ENCODE measurements at regions of chr2 and their contacts with region 1.

Region 1: DNA sequence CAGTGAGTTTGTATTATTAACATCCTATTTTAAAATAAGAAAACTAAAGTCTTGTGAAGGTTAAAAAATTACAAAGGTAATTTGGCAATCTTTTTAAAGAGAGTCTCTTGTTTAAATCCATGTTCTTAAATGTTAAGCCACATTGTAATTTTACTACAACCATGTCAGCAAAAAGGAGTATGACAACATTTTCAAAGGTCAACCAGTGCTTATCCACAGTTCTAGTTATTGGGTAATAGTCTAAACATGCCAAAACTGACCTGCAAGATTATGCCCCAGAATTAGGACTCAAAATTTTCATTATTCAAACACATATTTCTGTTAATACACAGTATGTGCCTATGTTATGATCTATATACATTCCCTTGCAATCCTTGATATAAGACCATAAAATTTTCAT is 1312.6 kb upstream of the CHAC2 start:
- H3K4me3 Mint-ChIP-seq: no peak overlapping the region
- H3K27ac Mint-ChIP-seq: no peak overlapping the region
- H3K4me1 Mint-ChIP-seq: no peaks in the 10 kb centered on the region
- H3K27me3 Mint-ChIP-seq: no peaks in the 10 kb centered on the region

Region 2: DNA sequence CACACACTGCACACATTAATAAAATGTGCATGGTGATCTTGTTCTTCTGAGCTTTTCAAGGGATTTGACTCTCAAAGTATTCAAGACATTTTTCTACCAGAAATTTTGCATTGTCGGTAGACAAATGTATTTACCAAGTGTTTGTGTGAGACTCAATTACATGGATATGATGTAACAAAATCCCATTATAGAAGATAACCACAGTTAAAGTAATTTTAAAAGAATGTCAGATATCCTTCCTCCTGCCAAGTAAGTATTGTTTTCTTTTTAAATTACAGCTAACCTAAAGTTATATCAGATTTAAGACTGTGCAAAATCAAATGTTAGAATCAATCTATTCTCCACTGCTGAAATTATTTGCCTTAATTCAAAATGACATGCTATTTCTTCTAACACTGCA is 31.9 kb before region 1 on chr2:
- intact Hi-C with region 1: loop called (anchors 1 kb)
- H3K4me3 Mint-ChIP-seq: no peak overlapping the region
- H3K27ac Mint-ChIP-seq: no peak overlapping the region
- H3K4me1 Mint-ChIP-seq: no peaks in the 10 kb centered on the region
- H3K27me3 Mint-ChIP-seq: no peaks in the 10 kb centered on the region

Measured in dendritic cell treated with granulocyte-macrophage colony-stimulating factor and Interleukin-4, amounts not matched to agents 40 ng/mL and 50 ng/mL, for 4 days (primary cell).